Activated T-helper 1 cell treated with anti-CD3 and anti-CD28 coated beads, Interleukin-12 subunit alpha, Interleukin-12 subunit beta, Interleukin-2, Interleukin-4 antibody, amounts not matched to agents 30 ng/mL and 10 ng/mL and 1 ng/mL, durations not matched to agents 14 hours and 24 hours and 36 hours (primary cell): ENCODE measurements at regions of chr11 and their contacts with region 1.

Region 1: DNA sequence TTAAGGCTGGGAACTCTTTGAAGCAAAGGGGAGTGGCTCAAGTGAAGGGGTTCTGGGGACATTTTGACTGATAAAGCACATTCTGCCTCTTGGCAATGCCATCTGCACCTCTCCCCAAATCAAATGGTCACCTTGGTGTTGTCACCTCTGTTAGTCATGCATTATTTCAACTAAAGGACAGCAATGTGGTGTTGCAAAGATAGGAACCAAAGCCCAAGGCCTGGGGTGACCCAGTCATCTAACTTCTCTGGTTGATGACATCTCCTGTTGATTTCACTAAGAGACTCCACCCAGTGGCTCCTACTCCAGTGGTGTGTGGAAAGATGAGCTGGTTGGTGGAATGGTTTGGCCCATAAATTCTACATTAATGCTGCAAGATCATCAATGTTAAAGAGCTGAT is 7.8 kb upstream of the MS4A1 start:
- DNase-seq: no peak
- H3K4me3 Mint-ChIP-seq: no peak overlapping the region
- H3K27ac Mint-ChIP-seq: no peak overlapping the region
- H3K4me1 Mint-ChIP-seq: peaks cover 17% of the 10 kb centered on the region
- H3K27me3 Mint-ChIP-seq: no peaks in the 10 kb centered on the region

Region 2: DNA sequence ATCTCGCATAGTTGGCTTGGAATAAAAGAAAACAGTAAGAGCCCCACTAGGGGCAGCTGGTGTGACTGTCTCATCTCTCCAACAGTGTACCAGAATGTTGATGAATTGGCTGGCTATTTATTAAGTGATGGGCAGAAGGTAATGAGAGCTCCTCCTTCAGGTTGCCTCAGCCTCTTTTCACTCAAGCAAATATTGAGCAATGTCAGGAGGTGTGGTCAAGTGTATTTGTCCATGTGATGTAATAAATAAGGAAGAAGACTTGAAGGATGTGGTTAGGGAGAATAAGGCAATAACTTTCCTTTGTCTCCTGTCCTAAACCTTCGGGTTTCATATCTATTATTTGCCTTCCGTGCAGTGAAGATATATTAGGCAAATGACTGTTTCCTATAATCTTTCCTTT is 581.4 kb before region 1 on chr11 and contains the start of gene TCN1:
- intact Hi-C with region 1: no loop called
- DNase-seq: no peak
- H3K4me3 Mint-ChIP-seq: no peak within 1 kb of the TSS
- H3K27ac Mint-ChIP-seq: no peak within 1 kb of the TSS
- H3K4me1 Mint-ChIP-seq: no peaks in the 10 kb centered on the region
- H3K27me3 Mint-ChIP-seq: peaks cover 6% of the 10 kb centered on the region
- total RNA-seq, gene TCN1: not detected in 2 replicates

Region 3: DNA sequence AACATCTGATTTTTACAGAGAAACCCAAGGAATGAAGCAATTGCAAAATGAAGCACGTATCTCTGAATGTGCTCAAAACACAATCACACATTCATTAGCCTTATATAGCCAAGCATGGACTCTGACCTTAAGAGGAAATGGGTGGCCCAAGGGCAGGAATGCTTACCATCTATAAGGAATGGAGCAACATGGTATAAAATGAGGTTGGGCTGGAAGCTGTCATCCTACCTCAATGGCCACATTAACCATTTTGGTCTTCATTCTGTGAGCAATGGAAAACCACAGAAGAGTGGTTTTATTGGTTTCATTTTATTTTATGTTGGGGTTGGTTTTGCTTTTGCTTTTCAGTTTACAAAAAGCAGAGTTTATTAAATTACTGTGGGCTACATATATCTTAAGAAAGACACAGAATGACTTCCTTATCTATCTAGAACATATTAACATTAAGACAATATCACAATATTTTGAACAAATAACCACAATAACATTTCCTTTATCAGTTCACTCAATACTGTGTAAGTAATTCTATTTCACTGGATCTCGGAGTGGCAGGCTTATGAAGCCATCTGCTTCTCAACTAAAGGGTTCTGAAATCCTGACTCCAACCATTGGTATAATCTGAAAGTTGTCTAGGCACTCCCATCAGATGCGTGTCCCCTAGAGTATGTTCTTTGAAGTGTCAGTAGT is 56.5 kb after region 1 on chr11:
- intact Hi-C with region 1: loop called (anchors 1 kb)
- DNase-seq: no peak
- H3K4me3 Mint-ChIP-seq: no peak overlapping the region
- H3K27ac Mint-ChIP-seq: no peak overlapping the region
- H3K4me1 Mint-ChIP-seq: peaks cover 10% of the 10 kb centered on the region
- H3K27me3 Mint-ChIP-seq: peaks cover 35% of the 10 kb centered on the region

Region 4: DNA sequence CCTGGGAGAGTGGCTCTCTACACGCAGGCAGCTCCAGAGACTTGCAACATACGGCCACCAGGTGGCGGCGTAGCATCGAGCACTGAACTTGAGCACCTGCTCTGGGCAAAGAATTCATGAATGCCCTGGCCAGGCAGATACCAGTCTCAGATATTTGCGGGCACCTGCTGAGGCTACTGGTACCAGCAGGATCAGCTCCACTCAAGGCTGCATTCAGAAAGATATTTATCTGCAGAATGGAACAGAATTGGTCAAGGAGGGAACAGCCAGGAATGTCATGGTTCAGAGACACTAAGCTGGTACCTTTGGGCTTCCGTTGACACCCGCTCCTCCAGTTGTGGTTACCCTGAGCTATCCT is 383.3 kb after region 1 on chr11:
- intact Hi-C with region 1: no loop called
- DNase-seq: peak; percentile 62
- H3K4me3 Mint-ChIP-seq: no peak overlapping the region
- H3K27ac Mint-ChIP-seq: no peak overlapping the region
- H3K4me1 Mint-ChIP-seq: peaks cover 12% of the 10 kb centered on the region
- H3K27me3 Mint-ChIP-seq: no peaks in the 10 kb centered on the region